Right ventricle myocardium superior (tissue), 1 donor: ENCODE measurements at regions of chr2 and their contacts with region 1.

Region 1: GRCh38 chr2:155377266-155377680 is 678.8 kb downstream of the KCNJ3 start:
- DNase-seq: no peak
- ATAC-seq: no peak

Region 2: GRCh38 chr2:155190340-155190739 is 186.9 kb before region 1 on chr2:
- intact Hi-C with region 1: no loop called
- DNase-seq: no peak
- ATAC-seq: no peak

Region 3: DNA sequence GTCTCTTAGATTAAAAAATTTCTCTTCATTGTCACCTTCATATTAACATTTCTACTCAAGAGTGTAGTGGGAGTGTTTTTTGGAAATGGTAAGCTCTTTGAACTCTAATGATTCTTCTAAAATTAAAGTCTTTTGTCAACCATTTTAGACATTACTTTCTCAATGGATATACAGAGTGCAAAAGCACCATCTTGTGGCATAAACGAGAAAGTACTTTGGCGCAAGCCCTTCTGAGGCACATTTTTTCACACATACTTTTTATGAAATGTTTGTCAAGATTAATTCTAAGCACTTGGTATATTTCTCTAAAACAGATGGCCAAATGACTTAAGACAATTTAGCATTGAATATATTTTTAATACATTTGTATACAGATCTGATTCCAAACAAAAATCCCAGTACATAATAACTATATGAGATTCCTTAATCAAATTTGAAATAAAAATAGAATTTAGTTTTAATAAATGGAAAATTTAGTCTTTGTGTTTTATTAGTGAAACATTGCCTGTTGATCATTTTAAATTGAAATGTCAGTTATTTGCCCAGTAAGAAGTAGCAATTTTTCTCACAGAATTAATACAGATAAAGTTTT is 1816.9 kb after region 1 on chr2:
- intact Hi-C with region 1: loop called (anchors 10 kb)
- DNase-seq: no peak
- ATAC-seq: peak; percentile 58